Dorsolateral prefrontal cortex (tissue), 120 donors: ENCODE measurements at regions of chr9 and their contacts with region 1.

Region 1: GRCh38 chr9:113095561-113095960 is 39.0 kb upstream of the ZFP37 start:
- DNase-seq: no peak
- H3K4me3 ChIP-seq: no peak overlapping the region
- H3K27ac ChIP-seq: no peak overlapping the region
- H3K27me3 ChIP-seq: peaks cover 0 to 75% (median 42%) of the 10 kb centered on the region in 45 donors
- CTCF ChIP-seq: no peak

Region 2: DNA sequence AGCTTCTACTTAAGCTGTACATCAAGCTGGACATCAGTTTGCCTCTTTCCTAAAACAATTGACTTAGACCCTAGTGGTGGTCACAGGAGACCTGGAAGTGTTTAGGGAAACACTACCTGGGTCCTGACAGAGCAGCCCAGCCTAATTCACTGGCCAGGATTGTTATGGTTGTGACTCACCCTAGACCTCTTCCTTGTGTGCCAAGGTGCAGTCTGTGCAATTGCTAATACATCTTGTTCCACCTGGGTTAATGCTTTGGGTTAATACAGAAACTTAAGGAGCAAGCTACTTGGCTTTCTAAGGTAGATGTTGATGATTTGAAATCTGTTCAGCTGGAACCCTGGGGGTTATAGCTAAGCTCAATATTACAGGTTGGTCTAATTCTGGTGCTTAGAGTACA is 156.1 kb before region 1 on chr9:
- intact Hi-C with region 1: loop called (anchors 10 kb)
- DNase-seq: no peak
- H3K4me3 ChIP-seq: no peak overlapping the region
- H3K27ac ChIP-seq: no peak overlapping the region
- H3K27me3 ChIP-seq: peaks cover 0 to 15% (median 0%) of the 10 kb centered on the region in 45 donors
- CTCF ChIP-seq: no peak

Region 3: DNA sequence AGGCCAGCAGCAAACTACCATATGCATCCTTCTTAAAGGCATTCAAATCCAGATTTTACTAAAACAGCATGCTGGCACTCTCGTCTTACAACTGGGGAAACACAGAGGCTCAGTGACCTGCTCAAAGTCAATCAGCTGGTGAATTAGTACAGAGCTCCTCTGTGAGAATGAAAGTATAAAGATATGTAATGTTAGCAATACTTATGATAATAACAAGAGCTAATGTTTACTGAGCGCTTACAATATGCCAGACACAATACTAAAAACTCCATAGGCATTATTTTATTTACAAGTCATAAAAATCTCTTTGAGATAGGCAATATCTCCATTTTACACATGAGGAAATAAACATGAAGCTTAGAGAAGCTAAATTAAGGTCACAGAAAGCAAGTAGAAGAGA is 96.9 kb after region 1 on chr9:
- intact Hi-C with region 1: no loop called
- DNase-seq: no peak
- H3K4me3 ChIP-seq: no peak overlapping the region
- H3K27ac ChIP-seq: no peak overlapping the region
- H3K27me3 ChIP-seq: no peaks in the 10 kb centered on the region
- CTCF ChIP-seq: no peak